ENCODE measurements at regions of chr5 and their contacts with region 1.

Region 1: GRCh38 chr5:142748568-142749249 is 21.5 kb upstream of the ARHGAP26 start:
- DNase-seq: peak; percentile 70
- ATAC-seq: peak; percentile 74
- H3K4me3 Mint-ChIP-seq: no peak overlapping the region
- H3K27ac Mint-ChIP-seq: no peak overlapping the region
- H3K4me1 Mint-ChIP-seq: peaks cover 13% of the 10 kb centered on the region
- H3K27me3 Mint-ChIP-seq: peaks cover 11% of the 10 kb centered on the region

Region 2: GRCh38 chr5:142568283-142568995 is 180.3 kb before region 1 on chr5:
- CTCF ChIA-PET with region 1: no interaction called
- DNase-seq: no peak
- ATAC-seq: no peak
- H3K4me3 Mint-ChIP-seq: no peak overlapping the region
- H3K27ac Mint-ChIP-seq: no peak overlapping the region
- H3K4me1 Mint-ChIP-seq: no peaks in the 10 kb centered on the region
- H3K27me3 Mint-ChIP-seq: peaks cover 5% of the 10 kb centered on the region

Region 3: GRCh38 chr5:142713121-142713706 is 35.5 kb before region 1 on chr5:
- CTCF ChIA-PET with region 1: interaction called, 140 read pairs
- DNase-seq: peak; percentile 89
- ATAC-seq: peak; percentile 100
- H3K4me3 Mint-ChIP-seq: peak overlapping the region; percentile 62
- H3K27ac Mint-ChIP-seq: no peak overlapping the region
- H3K4me1 Mint-ChIP-seq: peaks cover 8% of the 10 kb centered on the region
- H3K27me3 Mint-ChIP-seq: peaks cover 6% of the 10 kb centered on the region

Region 4: GRCh38 chr5:142769741-142770631 is 21.3 kb after region 1 on chr5 and contains the start of gene ARHGAP26:
- CTCF ChIA-PET with region 1: interaction called, 49 read pairs
- DNase-seq: peak; percentile 97
- ATAC-seq: peak; percentile 94
- H3K4me3 Mint-ChIP-seq: peak within 1 kb of the TSS; percentile 89
- H3K27ac Mint-ChIP-seq: peak within 1 kb of the TSS; percentile 88
- H3K4me1 Mint-ChIP-seq: peaks cover 37% of the 10 kb centered on the region
- H3K27me3 Mint-ChIP-seq: no peaks in the 10 kb centered on the region
- total RNA-seq, gene ARHGAP26: 12.6 to 38.9 TPM

Region 5: DNA sequence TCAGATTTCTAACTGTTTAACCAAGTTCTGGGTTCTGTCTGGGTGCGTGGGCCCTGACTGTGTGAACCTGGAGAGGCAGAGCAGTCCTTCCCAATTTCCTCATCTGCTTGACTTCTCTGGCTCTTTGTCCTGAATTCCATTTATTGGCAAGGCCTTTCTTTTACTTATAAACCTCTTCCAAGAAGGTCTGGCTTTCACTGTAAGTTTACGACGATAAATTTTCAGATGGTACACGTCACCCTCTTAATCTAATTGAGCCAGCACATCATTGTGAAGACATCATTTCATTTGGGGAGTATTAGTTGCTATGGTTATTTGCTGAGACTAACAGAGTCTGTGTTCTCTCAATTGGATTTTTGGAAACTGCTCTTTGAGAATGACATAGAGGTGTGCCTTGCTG is 113.9 kb after region 1 on chr5:
- CTCF ChIA-PET with region 1: interaction called, 97 read pairs
- DNase-seq: no peak
- ATAC-seq: no peak
- H3K4me3 Mint-ChIP-seq: no peak overlapping the region
- H3K27ac Mint-ChIP-seq: no peak overlapping the region
- H3K4me1 Mint-ChIP-seq: peaks cover 21% of the 10 kb centered on the region
- H3K27me3 Mint-ChIP-seq: no peaks in the 10 kb centered on the region

Region 6: GRCh38 chr5:142881076-142881783 is 132.5 kb after region 1 on chr5:
- CTCF ChIA-PET with region 1: interaction called, 132 read pairs
- DNase-seq: no peak
- ATAC-seq: peak; percentile 16
- H3K4me3 Mint-ChIP-seq: no peak overlapping the region
- H3K27ac Mint-ChIP-seq: no peak overlapping the region
- H3K4me1 Mint-ChIP-seq: peaks cover 7% of the 10 kb centered on the region
- H3K27me3 Mint-ChIP-seq: no peaks in the 10 kb centered on the region

Measured in activated CD8-positive, alpha-beta memory T cell treated with anti-CD3 and anti-CD28 coated beads, Interleukin-2, amount 10 ng/mL, durations not matched to agents 7 days and 5 days (primary cell).